Heart left ventricle (tissue), 16 donors: ENCODE measurements at regions of chr2 and their contacts with region 1.

Region 1: GRCh38 chr2:170973492-170974303 is 44.6 kb downstream of the GORASP2 start:
- DNase-seq: peak; percentile 82 to 91 (median 86)
- ATAC-seq: peak; percentile 79 to 96 (median 94)
- H3K4me3 ChIP-seq: peak overlapping the region; percentile 48 to 96 (median 73)
- H3K27ac ChIP-seq: peak overlapping the region; percentile 56 to 89 (median 79)
- H3K4me1 ChIP-seq: peaks cover 0 to 16% (median 6%) of the 10 kb centered on the region in 12 donors
- H3K27me3 ChIP-seq: no peaks in the 10 kb centered on the region
- CTCF ChIP-seq: peak; percentile 67 to 99 (median 96)
- POLR2A ChIP-seq: peak in 1 of 2 donors; percentile 24

Region 2: GRCh38 chr2:171018522-171018921 is 44.8 kb after region 1 on chr2:
- intact Hi-C with region 1: no loop called
- DNase-seq: no peak
- ATAC-seq: no peak
- H3K4me3 ChIP-seq: no peak overlapping the region
- H3K27ac ChIP-seq: no peak overlapping the region
- H3K4me1 ChIP-seq: no peaks in the 10 kb centered on the region
- H3K27me3 ChIP-seq: no peaks in the 10 kb centered on the region
- CTCF ChIP-seq: no peak
- POLR2A ChIP-seq: no peak

Region 3: GRCh38 chr2:171086352-171087290 is 112.9 kb after region 1 on chr2:
- intact Hi-C with region 1: loop called in 2 of 10 experiments (anchors 5 to 10 kb)
- DNase-seq: peak in 2 of 5 donors; percentile 18 to 27
- ATAC-seq: no peak
- H3K4me3 ChIP-seq: peak overlapping the region in 2 of 12 donors; percentile 6 to 19
- H3K27ac ChIP-seq: no peak overlapping the region
- H3K4me1 ChIP-seq: peaks cover 0 to 21% (median 4%) of the 10 kb centered on the region in 12 donors
- H3K27me3 ChIP-seq: no peaks in the 10 kb centered on the region
- CTCF ChIP-seq: peak in 11 of 12 donors; percentile 26 to 65 (median 48)
- POLR2A ChIP-seq: no peak

Region 4: GRCh38 chr2:171109571-171109970 is 135.9 kb after region 1 on chr2:
- intact Hi-C with region 1: no loop called
- DNase-seq: no peak
- ATAC-seq: no peak
- H3K4me3 ChIP-seq: no peak overlapping the region
- H3K27ac ChIP-seq: no peak overlapping the region
- H3K4me1 ChIP-seq: peaks cover 0 to 4% (median 0%) of the 10 kb centered on the region in 12 donors
- H3K27me3 ChIP-seq: no peaks in the 10 kb centered on the region
- CTCF ChIP-seq: no peak
- POLR2A ChIP-seq: no peak